AG04449 (cell line): ENCODE measurements at regions of chr1 and their contacts with region 1.

Region 1: GRCh38 chr1:109790735-109791494 is 27.2 kb upstream of the EPS8L3 start:
- DNase-seq: no peak
- H3K4me3 ChIP-seq: no peak overlapping the region
- CTCF ChIP-seq: peak; percentile 40

Region 2: GRCh38 chr1:109762821-109763645 is 27.9 kb before region 1 on chr1:
- CTCF ChIA-PET with region 1: no interaction called
- POLR2A ChIA-PET with region 1: no interaction called
- DNase-seq: no peak
- H3K4me3 ChIP-seq: no peak overlapping the region
- CTCF ChIP-seq: no peak

Region 3: DNA sequence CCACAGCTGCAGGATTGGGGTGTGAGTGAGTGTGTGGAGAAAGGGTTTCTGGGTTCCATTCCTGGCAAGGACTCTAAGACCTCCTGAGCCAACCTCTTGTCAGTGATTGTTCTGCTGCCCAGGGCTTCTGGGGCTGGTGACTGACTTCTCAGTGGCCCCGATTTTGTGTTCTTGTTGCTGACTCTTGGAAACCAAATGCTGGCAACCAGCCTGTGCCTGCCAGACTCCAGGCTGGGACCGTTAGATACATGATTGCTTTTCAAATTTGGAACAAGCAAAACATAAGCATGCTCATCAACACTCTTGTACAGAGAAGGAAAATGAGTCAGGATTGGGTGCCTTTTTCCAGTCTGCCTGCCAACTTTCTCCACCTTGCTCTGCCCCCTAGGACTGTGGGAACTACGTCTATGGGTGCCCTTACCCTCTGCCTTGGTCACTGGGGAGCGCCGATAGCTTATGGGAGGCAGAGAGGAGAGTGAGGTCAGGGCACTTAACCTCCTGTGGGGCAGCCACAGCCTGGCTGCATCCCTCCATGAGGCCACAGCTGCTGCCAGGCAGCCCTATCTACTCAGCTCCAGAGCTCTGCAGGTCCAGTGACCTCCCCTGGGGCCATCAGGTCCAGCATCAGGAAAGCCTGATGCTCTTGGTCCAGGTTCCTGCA is 12.1 kb after region 1 on chr1:
- CTCF ChIA-PET with region 1: interaction called, 27 read pairs
- POLR2A ChIA-PET with region 1: no interaction called
- DNase-seq: no peak
- H3K4me3 ChIP-seq: no peak overlapping the region
- CTCF ChIP-seq: no peak

Region 4: GRCh38 chr1:109910123-109910962 is 119.4 kb after region 1 on chr1 and contains the start of gene CSF1:
- CTCF ChIA-PET with region 1: interaction called, 10 read pairs
- POLR2A ChIA-PET with region 1: no interaction called
- DNase-seq: no peak
- H3K4me3 ChIP-seq: peak within 1 kb of the TSS; percentile 97
- CTCF ChIP-seq: no peak

Region 5: DNA sequence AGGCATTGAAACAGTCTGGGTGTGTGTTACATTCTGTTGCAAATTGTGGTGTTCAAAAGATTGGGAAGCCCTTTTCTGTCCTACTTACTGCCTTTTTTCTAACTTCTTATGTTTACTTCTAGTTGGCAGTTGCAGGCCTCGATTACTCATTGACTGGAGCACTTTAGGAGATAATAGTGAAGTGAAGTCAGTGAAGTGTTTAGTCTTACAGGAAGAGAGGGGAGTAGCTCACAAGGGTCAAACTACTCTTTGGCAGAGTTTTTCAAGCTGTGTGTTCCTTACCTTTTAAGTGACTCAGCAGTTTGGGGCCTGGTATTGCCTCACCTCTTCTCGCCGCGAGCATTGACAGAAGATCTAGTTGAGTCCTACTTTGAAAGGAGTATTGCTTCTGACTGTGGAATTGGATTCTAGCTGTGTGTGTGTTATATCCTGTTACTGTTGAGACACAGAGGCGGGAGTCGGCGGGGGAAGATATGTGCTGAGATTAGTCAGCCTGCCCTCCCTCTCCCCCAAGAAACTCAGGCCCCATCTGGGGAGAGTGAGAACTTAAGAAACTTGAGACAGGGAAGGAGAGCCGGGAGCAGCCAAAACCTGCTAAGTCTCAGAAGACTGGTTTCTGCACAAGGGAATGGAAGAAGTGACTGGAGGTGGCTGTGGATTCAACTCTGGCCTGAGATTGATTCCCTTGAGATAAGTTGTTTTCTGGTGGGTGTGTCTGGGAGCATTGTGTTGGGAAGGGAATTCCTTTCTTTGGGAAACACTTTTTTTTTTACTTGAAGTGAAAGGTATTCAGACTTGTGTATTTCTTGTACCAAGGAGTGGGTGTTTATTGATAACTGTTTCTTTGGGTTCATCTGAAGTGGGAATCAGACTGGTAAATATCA is 213.1 kb after region 1 on chr1:
- CTCF ChIA-PET with region 1: interaction called, 247 read pairs
- POLR2A ChIA-PET with region 1: interaction called, 3 read pairs
- DNase-seq: peak; percentile 93
- H3K4me3 ChIP-seq: peak overlapping the region; percentile 48
- CTCF ChIP-seq: no peak

Region 6: GRCh38 chr1:110011527-110012041 is 220.7 kb after region 1 on chr1:
- CTCF ChIA-PET with region 1: interaction called, 247 read pairs
- POLR2A ChIA-PET with region 1: no interaction called
- DNase-seq: no peak
- H3K4me3 ChIP-seq: no peak overlapping the region
- CTCF ChIP-seq: peak; percentile 61